ENCODE measurements at regions of chr5 and their contacts with region 1.

Region 1: GRCh38 chr5:163079618-163080017 is 357.8 kb upstream of the CCNG1 start:
- DNase-seq: peak; percentile 3
- CTCF ChIP-seq: peak; percentile 40

Region 2: GRCh38 chr5:163408311-163408923 is 328.8 kb after region 1 on chr5:
- in situ Hi-C with region 1: loop called (anchors 25 kb)
- DNase-seq: peak; percentile 58
- CTCF ChIP-seq: peak; percentile 74